ENCODE measurements at regions of chr1 and their contacts with region 1.

Region 1: GRCh38 chr1:232805269-232806185 is at the start of gene MAP10:
- DNase-seq: peak; percentile 89
- ATAC-seq: peak; percentile 92
- H3K4me3 Mint-ChIP-seq: peak within 1 kb of the TSS; percentile 79
- H3K27ac Mint-ChIP-seq: peak within 1 kb of the TSS; percentile 86
- H3K4me1 Mint-ChIP-seq: peaks cover 23% of the 10 kb centered on the region
- H3K27me3 Mint-ChIP-seq: peaks cover 3% of the 10 kb centered on the region
- total RNA-seq, gene MAP10: 1.4 to 1.5 TPM

Region 2: GRCh38 chr1:232519186-232519585 is 286.3 kb before region 1 on chr1:
- CTCF ChIA-PET with region 1: no interaction called
- POLR2A ChIA-PET with region 1: no interaction called
- intact Hi-C with region 1: no loop called
- DNase-seq: no peak
- ATAC-seq: no peak
- H3K4me3 Mint-ChIP-seq: no peak overlapping the region
- H3K27ac Mint-ChIP-seq: no peak overlapping the region
- H3K4me1 Mint-ChIP-seq: peaks cover 6% of the 10 kb centered on the region
- H3K27me3 Mint-ChIP-seq: peaks cover 2% of the 10 kb centered on the region

Region 3: GRCh38 chr1:232684363-232685105 is 121.0 kb before region 1 on chr1:
- CTCF ChIA-PET with region 1: no interaction called
- POLR2A ChIA-PET with region 1: no interaction called
- intact Hi-C with region 1: no loop called
- DNase-seq: no peak
- ATAC-seq: no peak
- H3K4me3 Mint-ChIP-seq: no peak overlapping the region
- H3K27ac Mint-ChIP-seq: no peak overlapping the region
- H3K4me1 Mint-ChIP-seq: no peaks in the 10 kb centered on the region
- H3K27me3 Mint-ChIP-seq: no peaks in the 10 kb centered on the region

Region 4: DNA sequence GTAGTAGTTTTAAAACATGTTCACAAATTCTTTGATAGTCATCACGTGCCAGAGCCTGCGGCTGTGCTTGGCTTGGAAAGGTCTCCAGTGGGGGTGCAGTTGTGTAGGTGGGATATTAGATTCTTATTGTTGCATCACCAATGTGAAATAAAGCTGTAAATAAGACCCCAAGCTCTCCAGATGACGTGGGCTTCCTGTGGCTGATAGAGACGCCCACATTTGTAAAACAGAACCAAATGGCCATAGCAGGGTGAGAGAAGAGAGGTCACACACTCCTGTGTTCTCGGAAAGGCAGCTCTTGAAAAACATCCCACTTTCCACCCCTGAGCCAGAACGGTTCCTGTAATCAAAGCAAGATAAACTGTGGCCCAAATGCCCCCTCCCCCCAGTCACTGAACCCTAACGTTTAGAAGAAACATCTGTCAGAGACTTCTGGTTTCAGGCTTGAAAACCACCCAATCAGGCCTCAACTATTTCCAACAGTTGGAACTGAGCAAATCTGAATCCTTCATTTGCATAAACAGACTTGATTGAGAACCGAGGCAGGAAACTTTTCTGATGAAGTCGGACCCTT is 138.2 kb after region 1 on chr1:
- CTCF ChIA-PET with region 1: no interaction called
- POLR2A ChIA-PET with region 1: no interaction called
- intact Hi-C with region 1: loop called in 1 of 2 experiments (anchors 10 kb)
- DNase-seq: peak; percentile 57
- ATAC-seq: peak; percentile 80
- H3K4me3 Mint-ChIP-seq: no peak overlapping the region
- H3K27ac Mint-ChIP-seq: peak overlapping the region; percentile 84
- H3K4me1 Mint-ChIP-seq: peaks cover 23% of the 10 kb centered on the region
- H3K27me3 Mint-ChIP-seq: peaks cover 2% of the 10 kb centered on the region

Region 5: GRCh38 chr1:232988572-232989040 is 183.1 kb after region 1 on chr1:
- CTCF ChIA-PET with region 1: no interaction called
- POLR2A ChIA-PET with region 1: no interaction called
- intact Hi-C with region 1: no loop called
- DNase-seq: no peak
- ATAC-seq: no peak
- H3K4me3 Mint-ChIP-seq: no peak overlapping the region
- H3K27ac Mint-ChIP-seq: no peak overlapping the region
- H3K4me1 Mint-ChIP-seq: no peaks in the 10 kb centered on the region
- H3K27me3 Mint-ChIP-seq: no peaks in the 10 kb centered on the region